ENCODE measurements at regions of chr13 and their contacts with region 1.

Region 1: DNA sequence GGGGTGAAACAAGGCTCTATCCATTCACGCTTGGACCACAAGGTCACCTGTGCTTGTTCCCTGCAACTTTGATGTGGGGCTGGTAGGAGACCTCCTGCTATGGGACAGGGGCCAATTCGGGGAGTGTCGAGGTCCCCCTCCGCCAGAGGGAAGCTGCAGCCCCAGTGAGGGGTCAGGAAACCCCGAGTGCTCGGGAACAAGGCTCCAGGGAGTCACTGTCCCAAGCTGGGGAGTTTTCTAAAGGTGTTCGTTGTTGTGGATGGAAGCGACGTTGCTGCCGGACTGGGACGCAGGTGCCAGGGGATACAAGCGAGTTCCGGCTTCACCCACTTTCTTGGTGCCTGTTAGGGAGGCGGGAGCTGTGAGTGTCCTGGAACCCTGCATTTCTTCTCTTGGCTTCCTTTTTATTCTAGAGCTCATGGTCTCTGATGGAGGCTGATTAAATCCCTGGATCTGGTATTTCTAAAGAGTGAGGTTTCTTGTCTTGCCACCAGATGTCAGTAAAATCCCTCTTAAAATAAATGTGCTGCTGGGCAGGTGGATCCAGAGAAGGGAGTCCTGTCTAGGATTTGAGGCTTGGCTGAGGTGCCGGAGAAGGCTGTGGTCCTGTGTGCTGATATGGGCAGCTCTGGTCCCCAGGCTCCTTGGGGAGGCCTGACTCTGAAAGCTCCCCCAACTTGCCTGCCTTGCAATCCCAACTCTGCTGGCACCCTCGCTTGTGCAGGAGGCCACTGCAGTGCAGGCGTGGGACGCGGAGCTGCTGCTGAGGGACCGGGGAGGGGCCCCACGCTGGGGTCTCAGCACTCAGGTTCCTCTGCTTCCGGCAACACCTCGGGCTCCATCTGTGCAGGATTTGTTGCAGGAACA is 153.9 kb downstream of the TEX29 start:
- DNase-seq: no peak
- ATAC-seq: no peak
- H3K4me3 Mint-ChIP-seq: no peak overlapping the region
- H3K27ac Mint-ChIP-seq: no peak overlapping the region
- H3K4me1 Mint-ChIP-seq: no peaks in the 10 kb centered on the region
- H3K27me3 Mint-ChIP-seq: no peaks in the 10 kb centered on the region

Region 2: GRCh38 chr13:111491021-111491420 is 16.7 kb after region 1 on chr13:
- CTCF ChIA-PET with region 1: no interaction called
- POLR2A ChIA-PET with region 1: no interaction called
- DNase-seq: no peak
- ATAC-seq: no peak
- H3K4me3 Mint-ChIP-seq: no peak overlapping the region
- H3K27ac Mint-ChIP-seq: no peak overlapping the region
- H3K4me1 Mint-ChIP-seq: no peaks in the 10 kb centered on the region
- H3K27me3 Mint-ChIP-seq: peaks cover 2% of the 10 kb centered on the region

Region 3: DNA sequence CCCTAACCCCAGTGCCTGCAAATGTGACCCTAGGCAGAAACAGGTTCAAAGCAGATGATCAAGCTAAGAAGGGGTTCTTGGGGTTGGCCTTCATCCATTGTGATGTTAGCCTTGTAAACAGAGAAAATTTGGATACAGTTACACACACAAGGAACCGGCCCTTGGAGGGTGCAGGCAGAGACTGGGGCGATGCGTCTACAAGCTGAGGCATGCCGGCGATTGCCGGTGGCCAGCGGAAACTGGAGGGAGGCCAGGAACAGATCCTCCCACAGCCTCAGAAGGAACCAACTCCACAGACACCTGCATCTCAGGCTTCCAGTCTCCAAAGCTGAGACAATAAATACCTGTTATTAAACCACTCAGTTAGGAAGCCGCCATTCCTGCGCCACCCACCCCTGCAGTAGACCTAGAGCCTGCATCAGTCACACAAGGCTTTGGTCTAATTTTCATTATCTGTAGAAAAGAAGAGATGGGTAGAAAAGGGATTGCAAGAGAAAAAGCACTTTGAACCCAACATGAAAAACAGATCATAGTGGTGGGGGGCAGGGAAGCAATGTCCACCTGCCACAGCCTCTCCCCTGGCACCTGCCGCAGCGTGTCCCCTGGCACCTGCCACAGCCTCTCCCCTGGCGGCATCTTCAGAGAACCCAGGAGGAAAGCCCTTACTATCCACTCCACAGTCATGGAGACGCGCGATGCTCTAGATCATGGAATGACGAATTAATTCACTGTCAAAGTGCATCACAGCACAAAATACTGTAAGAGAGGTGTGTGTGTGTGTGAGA is 472.8 kb after region 1 on chr13:
- CTCF ChIA-PET with region 1: no interaction called
- POLR2A ChIA-PET with region 1: no interaction called
- DNase-seq: no peak
- ATAC-seq: no peak
- H3K4me3 Mint-ChIP-seq: no peak overlapping the region
- H3K27ac Mint-ChIP-seq: no peak overlapping the region
- H3K4me1 Mint-ChIP-seq: no peaks in the 10 kb centered on the region
- H3K27me3 Mint-ChIP-seq: no peaks in the 10 kb centered on the region

Region 4: DNA sequence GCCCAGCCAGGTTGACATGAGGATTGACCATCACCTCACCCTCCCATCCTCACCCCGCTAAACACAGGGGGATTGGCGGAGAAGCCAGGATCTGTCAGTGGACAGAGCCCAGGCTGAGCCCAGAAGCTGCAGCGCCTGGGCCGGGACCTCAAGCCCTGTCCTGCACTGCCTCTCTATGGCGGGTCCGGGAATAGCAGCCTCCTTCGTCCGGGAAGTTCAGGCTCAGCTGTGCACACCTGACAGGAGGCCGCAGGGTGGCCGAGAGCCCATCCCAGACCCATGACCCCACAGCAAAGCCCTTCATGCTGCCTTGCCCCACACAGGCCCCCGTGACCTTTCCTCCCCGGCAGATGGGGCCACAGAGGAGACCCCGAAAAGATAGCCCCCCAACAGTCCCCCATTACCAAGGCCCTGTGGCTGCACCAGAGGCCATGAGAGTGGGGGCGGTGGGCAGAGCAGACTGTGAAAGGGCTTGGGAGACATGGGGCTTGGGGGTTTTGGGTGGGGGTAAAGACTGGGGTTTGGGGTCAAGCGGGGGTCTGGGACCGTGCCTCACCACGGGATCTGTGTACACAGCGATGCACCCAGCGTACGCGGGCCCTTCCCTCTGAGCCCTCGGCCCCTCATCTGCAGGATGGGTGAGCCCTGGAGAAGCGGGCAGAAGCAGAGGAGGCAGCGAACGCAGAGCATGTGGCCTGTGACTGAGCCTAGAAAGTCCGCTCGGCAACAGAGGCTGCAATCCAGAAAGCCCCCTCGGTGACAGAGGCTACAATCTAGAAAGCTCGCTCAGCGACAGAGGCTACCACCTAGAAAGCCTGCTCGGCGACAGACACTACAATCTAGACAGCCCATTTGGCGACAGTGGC is 969.9 kb after region 1 on chr13:
- CTCF ChIA-PET with region 1: interaction called, 12 read pairs
- POLR2A ChIA-PET with region 1: no interaction called
- DNase-seq: peak; percentile 70
- ATAC-seq: peak; percentile 75
- H3K4me3 Mint-ChIP-seq: no peak overlapping the region
- H3K27ac Mint-ChIP-seq: no peak overlapping the region
- H3K4me1 Mint-ChIP-seq: no peaks in the 10 kb centered on the region
- H3K27me3 Mint-ChIP-seq: no peaks in the 10 kb centered on the region

Measured in activated CD8-positive, alpha-beta T cell treated with anti-CD3 and anti-CD28 coated beads, Interleukin-2, amount 10 ng/mL, durations not matched to agents 7 days and 5 days (primary cell).